Panc1 (cell line): ENCODE measurements at regions of chr1 and their contacts with region 1.

Region 1: DNA sequence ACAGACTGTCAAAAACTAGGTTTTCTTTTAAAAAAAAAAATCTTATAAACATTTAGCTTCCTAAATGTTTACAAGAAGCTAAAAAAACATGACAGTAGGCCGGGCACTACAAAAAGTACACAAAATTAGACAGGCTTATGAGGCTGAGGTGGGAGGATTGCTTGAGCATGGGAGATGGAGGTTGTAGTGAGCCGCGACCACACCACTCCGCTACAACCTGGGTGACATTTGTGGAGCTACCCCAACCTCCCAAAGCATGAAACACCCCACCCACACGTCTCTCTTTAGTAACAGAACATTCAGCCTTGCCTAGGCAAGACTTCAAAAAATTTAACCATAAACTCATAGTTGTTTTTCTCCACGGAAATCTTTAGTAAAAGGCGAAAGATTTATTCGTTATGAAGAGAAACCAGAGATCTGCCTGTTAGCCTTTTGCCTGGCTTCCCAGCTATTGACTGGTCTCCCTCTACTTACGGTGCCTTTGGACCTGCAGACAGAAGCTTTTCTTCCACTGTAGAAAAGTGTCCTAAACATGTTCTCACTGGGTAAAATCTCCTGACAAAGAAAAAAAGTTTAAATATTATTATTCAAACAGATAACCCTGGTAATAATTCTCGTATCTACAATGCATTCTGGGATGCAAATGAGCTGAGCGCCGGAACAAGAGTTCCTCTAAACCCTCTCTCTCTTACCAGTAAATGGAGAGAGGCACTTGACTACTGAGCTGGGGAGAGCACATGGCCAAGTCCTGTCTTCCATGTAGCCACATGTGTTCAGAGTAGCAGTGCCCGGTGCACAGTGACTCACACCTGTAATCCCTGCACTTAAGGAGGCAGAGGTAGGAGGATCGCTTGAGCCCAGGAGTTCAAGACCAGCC is 9.2 kb downstream of the RNU5D-1 start:
- DNase-seq: peak; percentile 98
- ATAC-seq: peak; percentile 98
- H3K4me3 ChIP-seq: no peak overlapping the region
- H3K27ac ChIP-seq: peak overlapping the region; percentile 97
- H3K4me1 ChIP-seq: peaks cover 7% of the 10 kb centered on the region
- H3K27me3 ChIP-seq: no peaks in the 10 kb centered on the region
- CTCF ChIP-seq: no peak

Region 2: GRCh38 chr1:44643721-44644334 is 77.9 kb before region 1 on chr1:
- CTCF ChIA-PET with region 1: interaction called, 15 read pairs
- POLR2A ChIA-PET with region 1: interaction called, 3 read pairs
- in situ Hi-C with region 1: no loop called
- intact Hi-C with region 1: no loop called
- DNase-seq: no peak
- ATAC-seq: no peak
- H3K4me3 ChIP-seq: no peak overlapping the region
- H3K27ac ChIP-seq: no peak overlapping the region
- H3K4me1 ChIP-seq: no peaks in the 10 kb centered on the region; the same call in 1 of the 2 replicates
- H3K27me3 ChIP-seq: no peaks in the 10 kb centered on the region
- CTCF ChIP-seq: no peak

Region 3: GRCh38 chr1:44652445-44653106 is 69.1 kb before region 1 on chr1:
- CTCF ChIA-PET with region 1: interaction called, 12 read pairs
- POLR2A ChIA-PET with region 1: no interaction called
- in situ Hi-C with region 1: no loop called
- intact Hi-C with region 1: no loop called
- DNase-seq: peak; percentile 71
- ATAC-seq: peak; percentile 92
- H3K4me3 ChIP-seq: no peak overlapping the region
- H3K27ac ChIP-seq: 0 out of 2 replicates have a peak overlapping the region, but pooled peaks have one; percentile 24
- H3K4me1 ChIP-seq: no peaks in the 10 kb centered on the region
- H3K27me3 ChIP-seq: no peaks in the 10 kb centered on the region
- CTCF ChIP-seq: peak; percentile 97

Region 4: GRCh38 chr1:44775078-44775929 is 53.6 kb after region 1 on chr1 and contains the start of gene RPS8:
- CTCF ChIA-PET with region 1: no interaction called
- POLR2A ChIA-PET with region 1: interaction called, 12 read pairs
- in situ Hi-C with region 1: no loop called
- intact Hi-C with region 1: no loop called
- DNase-seq: peak; percentile 83
- ATAC-seq: peak; percentile 93
- H3K4me3 ChIP-seq: peak within 1 kb of the TSS; percentile 84 to 91
- H3K27ac ChIP-seq: peak within 1 kb of the TSS; percentile 92
- H3K4me1 ChIP-seq: peaks cover 10% of the 10 kb centered on the region
- H3K27me3 ChIP-seq: no peaks in the 10 kb centered on the region
- CTCF ChIP-seq: no peak
- total RNA-seq, gene RPS8: 1,087 TPM